CD8-positive, alpha-beta memory T cell (primary cell): ENCODE measurements at regions of chr9 and their contacts with region 1.

Region 1: DNA sequence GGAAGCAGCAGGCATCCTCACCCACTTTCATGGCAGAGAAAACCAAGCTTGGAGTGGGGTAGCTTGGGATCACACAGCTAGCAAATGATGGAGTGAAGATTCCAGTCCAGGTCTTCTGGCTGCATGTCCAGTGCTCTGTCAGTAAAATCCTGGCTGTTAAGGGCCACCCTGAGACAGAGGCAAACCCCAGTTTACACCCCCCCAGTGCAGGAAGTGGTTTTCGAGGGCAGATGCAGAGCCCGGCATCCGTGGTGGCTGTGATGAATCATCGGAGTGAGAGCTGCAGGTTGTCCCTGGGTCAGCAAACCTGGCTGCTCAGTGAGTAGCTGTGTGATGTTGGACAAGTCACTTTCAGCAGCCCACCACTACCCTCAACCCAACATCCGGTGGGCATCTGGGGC is 115.4 kb downstream of the RGS3 start:
- DNase-seq: peak; percentile 71 to 92 (median 79)
- H3K4me3 ChIP-seq: peak overlapping the region; percentile 48
- H3K4me3 Mint-ChIP-seq: peak overlapping the region; percentile 72 to 87 (median 82)
- H3K27ac ChIP-seq: peak overlapping the region; percentile 41
- H3K27ac Mint-ChIP-seq: peak overlapping the region; percentile 91 to 97 (median 95)
- H3K4me1 ChIP-seq: peaks cover 65% of the 10 kb centered on the region
- H3K4me1 Mint-ChIP-seq: peaks cover 84 to 94% (median 90%) of the 10 kb centered on the region in 3 donors
- H3K27me3 ChIP-seq: no peaks in the 10 kb centered on the region
- H3K27me3 Mint-ChIP-seq: no peaks in the 10 kb centered on the region

Region 2: GRCh38 chr9:113401027-113401792 is 177.7 kb before region 1 on chr9 and contains the start of gene ALAD:
- CTCF ChIA-PET with region 1: interaction called, 11 read pairs
- POLR2A ChIA-PET with region 1: interaction called, 3 read pairs
- DNase-seq: peak; percentile 99 to 100 (median 100)
- H3K4me3 ChIP-seq: peak within 1 kb of the TSS; percentile 82
- H3K4me3 Mint-ChIP-seq: peak within 1 kb of the TSS; percentile 92 to 99 (median 94)
- H3K27ac ChIP-seq: peak within 1 kb of the TSS; percentile 44
- H3K27ac Mint-ChIP-seq: peak within 1 kb of the TSS; percentile 69 to 96 (median 82)
- H3K4me1 ChIP-seq: peaks cover 16% of the 10 kb centered on the region
- H3K4me1 Mint-ChIP-seq: peaks cover 15 to 37% (median 19%) of the 10 kb centered on the region in 3 donors
- H3K27me3 ChIP-seq: no peaks in the 10 kb centered on the region
- H3K27me3 Mint-ChIP-seq: peaks cover 0 to 2% of the 10 kb centered on the region in 2 donors
- total RNA-seq, gene ALAD: 22.3 to 22.8 TPM

Region 3: DNA sequence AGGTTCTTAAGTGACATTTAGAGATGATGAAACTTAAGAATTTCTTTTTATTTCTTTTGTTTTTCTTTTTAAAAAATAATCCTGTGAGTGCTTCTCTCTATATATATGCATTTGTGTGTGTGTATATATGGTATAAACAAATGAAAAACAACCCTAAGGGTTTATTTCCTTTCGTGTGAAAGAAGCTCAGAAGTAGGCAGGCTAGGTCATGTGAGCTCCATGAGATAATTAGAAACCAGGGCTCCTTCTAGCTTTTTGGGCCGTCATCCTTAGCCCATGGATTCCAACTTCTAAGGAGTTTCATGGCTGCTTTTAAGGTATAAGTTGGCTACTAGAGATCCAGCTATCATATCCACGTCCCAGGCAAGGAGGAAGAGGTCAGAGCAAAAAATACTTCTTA is 157.2 kb before region 1 on chr9:
- CTCF ChIA-PET with region 1: no interaction called
- POLR2A ChIA-PET with region 1: no interaction called
- DNase-seq: no peak
- H3K4me3 ChIP-seq: no peak overlapping the region
- H3K4me3 Mint-ChIP-seq: no peak overlapping the region
- H3K27ac ChIP-seq: no peak overlapping the region
- H3K27ac Mint-ChIP-seq: no peak overlapping the region
- H3K4me1 ChIP-seq: no peaks in the 10 kb centered on the region
- H3K4me1 Mint-ChIP-seq: no peaks in the 10 kb centered on the region
- H3K27me3 ChIP-seq: no peaks in the 10 kb centered on the region
- H3K27me3 Mint-ChIP-seq: peaks cover 10 to 19% of the 10 kb centered on the region in 2 donors

Region 4: GRCh38 chr9:113446323-113446740 is 132.6 kb before region 1 on chr9:
- CTCF ChIA-PET with region 1: interaction called, 50 read pairs
- POLR2A ChIA-PET with region 1: no interaction called
- DNase-seq: peak in 2 of 5 donors; percentile 34 to 40
- H3K4me3 ChIP-seq: no peak overlapping the region
- H3K4me3 Mint-ChIP-seq: no peak overlapping the region
- H3K27ac ChIP-seq: no peak overlapping the region
- H3K27ac Mint-ChIP-seq: no peak overlapping the region
- H3K4me1 ChIP-seq: no peaks in the 10 kb centered on the region
- H3K4me1 Mint-ChIP-seq: no peaks in the 10 kb centered on the region
- H3K27me3 ChIP-seq: no peaks in the 10 kb centered on the region
- H3K27me3 Mint-ChIP-seq: peaks cover 1 to 3% of the 10 kb centered on the region in 2 donors

Region 5: DNA sequence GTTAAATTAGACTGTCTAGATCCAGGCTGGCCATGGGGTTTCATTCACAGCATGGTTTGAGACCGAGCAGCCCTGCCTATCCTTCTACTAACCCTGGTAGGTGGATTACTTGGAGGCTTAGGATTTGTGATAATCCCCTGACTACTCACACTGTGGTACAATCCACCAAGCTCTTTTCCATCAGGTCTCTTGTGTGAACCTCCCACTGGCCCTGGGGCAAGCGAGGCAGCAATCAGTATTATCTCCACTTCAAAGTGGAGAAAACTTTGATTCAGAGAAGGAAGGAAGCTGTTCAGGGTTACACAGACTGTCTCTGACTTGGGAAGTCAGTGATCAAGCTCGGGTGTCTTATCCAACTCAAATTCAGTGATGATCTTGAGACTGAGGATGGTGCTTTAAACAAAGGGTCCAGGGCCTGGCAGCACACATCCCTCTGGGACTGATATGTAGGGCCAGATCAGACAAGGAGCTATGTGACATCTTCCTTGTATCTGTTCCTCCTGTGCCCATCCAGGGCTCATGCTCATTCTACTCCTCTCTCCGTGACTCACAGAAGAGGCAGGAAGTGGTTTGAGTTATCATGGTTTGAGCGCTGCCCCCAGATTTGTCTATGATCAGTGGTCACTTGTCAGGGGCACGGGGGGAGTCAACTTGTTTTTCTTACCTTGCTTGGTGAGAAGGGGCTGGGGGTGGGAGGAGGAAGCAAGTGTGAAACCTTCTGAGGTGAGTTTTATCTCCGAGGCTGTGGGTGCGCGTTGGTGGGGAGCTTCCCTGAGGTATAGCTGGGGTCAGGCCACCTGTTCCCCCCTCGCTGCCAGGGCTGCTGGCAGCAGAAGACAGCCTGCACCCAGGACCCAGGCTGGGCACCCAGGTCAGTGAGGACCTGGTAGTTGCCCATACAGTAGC is 66.8 kb before region 1 on chr9:
- CTCF ChIA-PET with region 1: interaction called, 30 read pairs
- POLR2A ChIA-PET with region 1: interaction called, 27 read pairs
- DNase-seq: peak; percentile 62 to 89 (median 69)
- H3K4me3 ChIP-seq: peak overlapping the region; percentile 39
- H3K4me3 Mint-ChIP-seq: peak overlapping the region; percentile 39 to 76 (median 73)
- H3K27ac ChIP-seq: peak overlapping the region; percentile 43
- H3K27ac Mint-ChIP-seq: peak overlapping the region; percentile 89 to 98 (median 94)
- H3K4me1 ChIP-seq: peaks cover 64% of the 10 kb centered on the region
- H3K4me1 Mint-ChIP-seq: peaks cover 60 to 72% (median 64%) of the 10 kb centered on the region in 3 donors
- H3K27me3 ChIP-seq: no peaks in the 10 kb centered on the region
- H3K27me3 Mint-ChIP-seq: peaks cover 0 to 1% of the 10 kb centered on the region in 2 donors

Region 6: DNA sequence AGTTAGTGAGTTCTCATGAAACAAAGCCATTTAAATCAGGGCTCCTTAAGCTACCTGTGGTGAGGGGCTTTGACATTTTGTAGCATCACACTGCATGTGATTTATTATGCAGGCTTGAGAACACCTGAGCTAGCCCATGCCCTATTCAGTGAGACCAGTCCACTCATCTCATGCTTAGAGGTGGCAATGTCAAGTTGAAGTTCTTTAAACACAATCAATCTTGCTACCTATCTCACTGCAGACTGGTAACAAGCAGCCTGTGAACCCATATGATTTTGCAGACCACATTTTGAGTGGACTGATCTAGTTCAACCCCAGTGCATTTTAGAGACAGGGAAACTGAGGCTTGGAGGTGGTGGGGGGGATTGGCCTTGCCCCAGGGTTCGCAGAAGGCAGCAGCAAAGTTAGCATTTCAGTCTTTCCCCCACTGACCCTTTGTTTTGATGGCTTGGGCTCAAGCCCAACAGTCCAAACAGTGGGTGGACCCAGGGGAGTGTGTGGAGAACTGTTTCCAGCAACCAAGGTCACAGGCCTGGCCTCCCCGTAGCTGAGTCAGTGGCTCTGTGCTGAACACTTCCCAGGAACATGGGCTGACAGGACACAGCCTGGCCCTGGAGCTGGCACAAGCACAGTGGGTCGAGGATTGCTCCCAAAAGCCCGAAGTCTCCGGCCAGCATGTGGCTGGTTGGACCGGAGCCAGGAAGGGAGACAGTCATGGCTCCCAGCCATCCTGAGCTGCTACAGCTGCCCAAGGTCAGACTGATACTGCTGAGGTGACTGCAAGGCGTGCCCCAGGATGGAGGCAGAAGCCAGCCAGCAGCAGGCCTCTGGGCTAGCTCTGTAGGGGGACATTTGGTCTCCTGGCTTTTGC is 20.0 kb before region 1 on chr9:
- CTCF ChIA-PET with region 1: interaction called, 11 read pairs
- POLR2A ChIA-PET with region 1: interaction called, 4 read pairs
- DNase-seq: no peak
- H3K4me3 ChIP-seq: no peak overlapping the region
- H3K4me3 Mint-ChIP-seq: no peak overlapping the region
- H3K27ac ChIP-seq: no peak overlapping the region
- H3K27ac Mint-ChIP-seq: peak overlapping the region in 5 of 8 donors; percentile 37 to 88 (median 64)
- H3K4me1 ChIP-seq: peaks cover 12% of the 10 kb centered on the region
- H3K4me1 Mint-ChIP-seq: peaks cover 42 to 85% (median 69%) of the 10 kb centered on the region in 3 donors
- H3K27me3 ChIP-seq: no peaks in the 10 kb centered on the region
- H3K27me3 Mint-ChIP-seq: peaks cover 0 to 1% of the 10 kb centered on the region in 2 donors

Region 7: GRCh38 chr9:113657703-113658544 is 79.0 kb after region 1 on chr9:
- CTCF ChIA-PET with region 1: interaction called, 49 read pairs
- POLR2A ChIA-PET with region 1: no interaction called
- DNase-seq: peak; percentile 61 to 82 (median 69)
- H3K4me3 ChIP-seq: no peak overlapping the region
- H3K4me3 Mint-ChIP-seq: no peak overlapping the region
- H3K27ac ChIP-seq: no peak overlapping the region
- H3K27ac Mint-ChIP-seq: peak overlapping the region in 1 of 8 donors; percentile 6
- H3K4me1 ChIP-seq: no peaks in the 10 kb centered on the region
- H3K4me1 Mint-ChIP-seq: peaks cover 0 to 5% (median 3%) of the 10 kb centered on the region in 3 donors
- H3K27me3 ChIP-seq: peaks cover 6% of the 10 kb centered on the region
- H3K27me3 Mint-ChIP-seq: peaks cover 13 to 30% of the 10 kb centered on the region in 2 donors